OCI-LY7 (cell line): ENCODE measurements at regions of chr3 and their contacts with region 1.

Region 1: DNA sequence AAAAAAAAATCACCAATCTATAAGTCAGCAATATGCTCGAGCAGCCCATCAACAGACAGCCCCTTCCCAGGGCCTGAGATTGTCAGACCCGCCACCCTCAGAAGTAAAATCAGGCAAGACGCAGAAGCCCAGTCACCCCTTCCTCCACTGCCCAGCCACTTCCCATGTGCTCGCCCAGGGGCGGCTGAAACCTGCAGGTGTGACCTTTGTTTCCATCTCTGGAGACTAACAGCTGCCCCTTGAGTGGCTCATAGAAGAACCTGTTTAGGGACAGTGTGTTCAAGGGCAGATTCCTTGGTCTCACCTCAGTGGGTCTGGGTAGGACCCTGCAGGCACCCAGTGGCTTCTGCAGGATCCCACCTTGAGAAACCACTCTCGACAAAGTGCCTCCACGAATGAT is 105.6 kb downstream of the MYLK start:
- DNase-seq: no peak
- H3K4me3 ChIP-seq: no peak overlapping the region
- H3K27ac ChIP-seq: no peak overlapping the region
- H3K4me1 ChIP-seq: no peaks in the 10 kb centered on the region
- CTCF ChIP-seq: no peak

Region 2: DNA sequence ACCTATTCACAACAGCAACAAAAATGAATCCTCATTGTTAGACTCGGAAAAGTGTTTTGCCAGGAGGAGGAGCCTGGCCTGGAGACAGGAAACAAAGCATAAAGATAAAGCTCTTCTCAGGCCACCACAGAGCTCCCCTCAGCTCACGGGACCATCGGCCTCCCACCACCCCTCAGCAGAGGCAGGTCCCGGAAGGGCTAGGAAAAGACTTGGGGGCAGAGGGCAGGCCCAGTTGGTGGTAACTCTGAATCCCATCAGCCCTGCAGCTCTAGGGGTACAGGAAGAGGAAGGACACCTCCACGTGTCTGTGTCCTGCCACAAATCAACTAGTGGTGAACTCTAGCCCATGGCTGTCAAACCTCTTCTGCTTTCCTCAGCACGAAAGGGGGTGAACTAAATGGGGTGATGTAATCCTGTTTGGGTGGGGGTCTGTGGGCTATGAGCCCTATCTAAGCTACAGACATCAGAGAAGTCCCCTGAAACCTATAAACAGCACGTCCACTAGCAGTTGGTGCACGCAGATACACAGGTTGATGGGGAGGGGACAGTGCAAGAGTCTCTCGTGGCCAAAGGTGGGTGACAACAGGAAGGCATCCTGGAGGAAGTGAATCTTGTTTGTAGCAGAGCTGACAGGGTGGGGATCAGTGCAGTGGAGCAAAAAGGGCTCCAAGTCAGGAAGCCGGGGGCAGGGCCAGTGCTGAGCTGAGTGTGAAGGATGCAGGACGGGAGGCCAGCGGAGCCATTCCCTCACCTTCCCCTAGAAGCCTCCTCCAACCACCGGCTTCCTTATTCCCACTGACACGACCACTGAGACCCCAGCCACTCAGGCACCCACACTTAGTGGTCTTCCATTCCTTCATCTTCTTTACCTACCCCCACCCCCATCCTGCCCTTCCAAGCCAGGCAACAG is 82.5 kb before region 1 on chr3:
- CTCF ChIA-PET with region 1: no interaction called
- POLR2A ChIA-PET with region 1: interaction called, 11 read pairs
- intact Hi-C with region 1: no loop called
- DNase-seq: no peak
- H3K4me3 ChIP-seq: no peak overlapping the region
- H3K27ac ChIP-seq: no peak overlapping the region
- H3K4me1 ChIP-seq: no peaks in the 10 kb centered on the region
- CTCF ChIP-seq: no peak

Region 3: DNA sequence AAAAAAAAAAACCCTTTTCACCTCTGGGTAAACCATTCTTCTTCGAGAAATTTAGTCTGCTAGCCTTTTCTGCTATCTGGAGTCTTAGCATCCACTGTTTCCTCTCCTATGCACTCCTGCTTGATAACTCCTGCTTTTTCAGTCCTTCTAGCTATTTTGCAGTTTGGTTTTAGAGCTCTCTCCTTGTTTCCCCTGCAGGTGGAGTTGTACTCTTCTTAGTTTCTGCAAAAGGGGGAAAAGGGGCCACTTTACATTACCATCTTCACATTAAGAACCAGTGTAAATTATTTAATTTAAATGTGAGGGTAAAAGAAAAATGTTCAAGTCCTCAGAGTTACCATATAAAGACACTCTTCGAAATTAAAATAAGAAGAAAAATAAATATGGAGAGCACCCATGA is 129.2 kb after region 1 on chr3:
- CTCF ChIA-PET with region 1: no interaction called
- POLR2A ChIA-PET with region 1: no interaction called
- intact Hi-C with region 1: no loop called
- DNase-seq: no peak
- H3K4me3 ChIP-seq: no peak overlapping the region
- H3K27ac ChIP-seq: no peak overlapping the region
- H3K4me1 ChIP-seq: no peaks in the 10 kb centered on the region
- CTCF ChIP-seq: peak; percentile 58